ENCODE measurements at regions of chr15 and their contacts with region 1.

Region 1: GRCh38 chr15:77821188-77821958 is 188.7 kb upstream of the LINGO1 start:
- DNase-seq: peak; percentile 70 to 87 (median 82)
- H3K4me3 ChIP-seq: peak overlapping the region in 27 of 59 donors; percentile 2 to 73 (median 61)
- H3K27ac ChIP-seq: peak overlapping the region in 41 of 59 donors; percentile 2 to 92 (median 64)
- H3K27me3 ChIP-seq: peaks cover 0 to 27% (median 2%) of the 10 kb centered on the region in 45 donors
- CTCF ChIP-seq: peak; percentile 30 to 90 (median 76)

Region 2: GRCh38 chr15:77107531-77108355 is 713.6 kb before region 1 on chr15:
- intact Hi-C with region 1: loop called in 1 of 2 experiments (anchors 10 kb)
- DNase-seq: peak in 9 of 10 donors; percentile 46 to 71 (median 65)
- H3K4me3 ChIP-seq: no peak overlapping the region
- H3K27ac ChIP-seq: peak overlapping the region in 46 of 59 donors; percentile 1 to 77 (median 48)
- H3K27me3 ChIP-seq: no peaks in the 10 kb centered on the region
- CTCF ChIP-seq: peak in 54 of 56 donors; percentile 25 to 76 (median 59)

Region 3: DNA sequence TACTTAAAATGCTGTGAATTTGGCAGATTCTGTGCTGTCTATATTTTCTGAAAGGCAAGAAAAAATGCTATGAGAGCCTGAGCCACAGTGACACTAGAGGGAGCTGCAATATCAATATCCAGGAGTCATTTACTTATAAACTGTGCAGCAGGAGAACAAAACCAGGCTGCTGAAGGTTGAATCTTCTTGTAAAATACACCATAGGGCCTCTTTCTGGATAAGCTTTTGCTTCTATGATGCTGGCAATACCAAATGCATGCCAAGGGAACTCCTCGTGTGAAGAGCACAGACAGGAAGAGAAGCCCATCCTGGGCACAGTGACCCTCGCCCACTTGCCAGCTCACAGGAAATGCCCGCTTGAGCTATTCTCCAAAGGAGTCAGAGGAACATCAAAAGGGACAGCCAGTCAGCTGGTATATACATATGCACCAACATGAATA is 702.5 kb before region 1 on chr15:
- intact Hi-C with region 1: loop called in 1 of 2 experiments (anchors 2 kb)
- DNase-seq: peak in 2 of 10 donors; percentile 40 to 73
- H3K4me3 ChIP-seq: no peak overlapping the region
- H3K27ac ChIP-seq: peak overlapping the region in 26 of 59 donors; percentile 2 to 71 (median 38)
- H3K27me3 ChIP-seq: no peaks in the 10 kb centered on the region
- CTCF ChIP-seq: peak; percentile 54 to 93 (median 78)

Region 4: GRCh38 chr15:77186594-77187011 is 634.8 kb before region 1 on chr15:
- intact Hi-C with region 1: loop called in 1 of 2 experiments (anchors 10 kb)
- DNase-seq: no peak
- H3K4me3 ChIP-seq: no peak overlapping the region
- H3K27ac ChIP-seq: peak overlapping the region in 44 of 59 donors; percentile 32 to 85 (median 68)
- H3K27me3 ChIP-seq: no peaks in the 10 kb centered on the region
- CTCF ChIP-seq: peak; percentile 39 to 79 (median 65)

Region 5: DNA sequence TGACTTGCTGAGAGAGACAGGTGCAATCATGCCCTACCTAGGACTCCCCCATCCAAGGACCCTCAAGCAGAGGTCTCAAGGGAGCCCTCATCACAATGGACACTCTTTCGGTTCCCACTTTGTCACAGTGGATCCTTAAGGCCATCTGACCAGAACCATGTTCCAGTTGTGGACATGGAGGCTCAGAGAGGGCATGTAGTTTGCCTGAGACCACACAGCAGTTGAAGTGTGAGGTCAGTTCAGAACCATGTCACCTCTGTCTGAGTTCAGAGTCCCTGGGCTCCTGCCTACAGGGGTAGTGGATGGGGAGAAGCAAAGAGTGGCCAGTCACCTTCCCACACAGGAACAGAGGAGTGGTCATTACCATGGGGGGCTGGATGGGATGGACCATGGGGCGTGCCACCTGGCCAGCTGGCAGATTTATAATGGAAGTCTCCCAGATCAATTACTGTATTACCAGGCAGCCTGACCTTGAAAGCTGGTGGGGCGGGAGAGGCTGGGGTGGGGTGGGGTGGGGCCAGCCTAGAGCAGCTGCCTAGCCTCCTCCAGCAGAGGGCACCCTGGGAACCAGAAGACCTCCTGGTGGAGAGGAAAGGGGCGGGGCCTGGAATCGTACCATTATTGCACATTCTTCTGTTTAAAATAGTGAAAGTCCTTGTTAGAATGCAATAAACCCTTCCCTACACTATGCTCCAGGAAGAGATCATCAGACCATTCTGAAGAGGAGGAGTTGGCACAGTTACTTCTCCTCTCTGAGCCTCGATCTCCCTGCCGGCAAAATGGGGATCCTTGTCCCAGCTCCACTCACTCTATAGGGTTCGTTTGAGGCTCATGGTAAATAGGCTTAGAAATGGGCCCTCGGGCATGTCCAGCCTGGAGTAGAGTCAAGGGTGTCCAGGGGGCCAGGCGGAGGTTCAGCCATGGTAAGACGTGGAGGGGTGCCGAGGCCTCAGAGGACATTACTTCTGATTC is 161.7 kb before region 1 on chr15:
- intact Hi-C with region 1: loop called in 1 of 2 experiments (anchors 5 kb)
- DNase-seq: peak in 3 of 10 donors; percentile 65 to 72 (median 67)
- H3K4me3 ChIP-seq: no peak overlapping the region
- H3K27ac ChIP-seq: peak overlapping the region in 51 of 59 donors; percentile 1 to 95 (median 63)
- H3K27me3 ChIP-seq: no peaks in the 10 kb centered on the region
- CTCF ChIP-seq: peak in 53 of 56 donors; percentile 34 to 76 (median 56)

Measured in dorsolateral prefrontal cortex (tissue), 120 donors.